ENCODE measurements at regions of chr18 and their contacts with region 1.

Region 1: GRCh38 chr18:67290421-67290820 is 226.1 kb downstream of the DSEL start:
- DNase-seq: no peak
- ATAC-seq: no peak
- H3K4me3 ChIP-seq: no peak overlapping the region
- H3K4me3 Mint-ChIP-seq: no peak overlapping the region
- H3K27ac ChIP-seq: no peak overlapping the region
- H3K27ac Mint-ChIP-seq: no peak overlapping the region
- H3K4me1 ChIP-seq: no peaks in the 10 kb centered on the region
- H3K4me1 Mint-ChIP-seq: no peaks in the 10 kb centered on the region
- H3K27me3 ChIP-seq: no peaks in the 10 kb centered on the region
- H3K27me3 Mint-ChIP-seq: no peaks in the 10 kb centered on the region
- CTCF ChIP-seq: no peak

Region 2: DNA sequence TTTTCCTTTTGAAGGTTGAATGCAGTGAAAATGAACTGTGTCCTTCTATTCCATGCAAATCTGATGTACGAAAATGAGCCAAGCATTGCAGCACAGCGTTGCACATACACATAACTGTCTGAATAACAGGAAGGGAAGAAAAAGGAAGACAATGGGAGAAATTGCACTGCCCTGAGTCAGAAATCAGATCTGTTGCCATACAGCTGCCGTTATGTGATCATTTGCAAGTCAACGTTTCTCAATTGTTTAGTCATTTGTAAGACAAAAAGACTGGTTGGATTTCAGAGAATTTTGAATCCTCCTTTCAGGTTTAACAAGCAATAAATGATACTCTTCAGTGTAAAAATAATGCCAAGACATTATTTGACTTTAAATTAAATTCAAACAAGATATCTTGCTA is 58.0 kb before region 1 on chr18:
- CTCF ChIA-PET with region 1: no interaction called
- POLR2A ChIA-PET with region 1: no interaction called
- intact Hi-C with region 1: no loop called
- DNase-seq: no peak
- ATAC-seq: no peak
- H3K4me3 ChIP-seq: no peak overlapping the region
- H3K4me3 Mint-ChIP-seq: no peak overlapping the region
- H3K27ac ChIP-seq: no peak overlapping the region
- H3K27ac Mint-ChIP-seq: no peak overlapping the region
- H3K4me1 ChIP-seq: no peaks in the 10 kb centered on the region
- H3K4me1 Mint-ChIP-seq: no peaks in the 10 kb centered on the region
- H3K27me3 ChIP-seq: no peaks in the 10 kb centered on the region
- H3K27me3 Mint-ChIP-seq: no peaks in the 10 kb centered on the region
- CTCF ChIP-seq: no peak

Region 3: DNA sequence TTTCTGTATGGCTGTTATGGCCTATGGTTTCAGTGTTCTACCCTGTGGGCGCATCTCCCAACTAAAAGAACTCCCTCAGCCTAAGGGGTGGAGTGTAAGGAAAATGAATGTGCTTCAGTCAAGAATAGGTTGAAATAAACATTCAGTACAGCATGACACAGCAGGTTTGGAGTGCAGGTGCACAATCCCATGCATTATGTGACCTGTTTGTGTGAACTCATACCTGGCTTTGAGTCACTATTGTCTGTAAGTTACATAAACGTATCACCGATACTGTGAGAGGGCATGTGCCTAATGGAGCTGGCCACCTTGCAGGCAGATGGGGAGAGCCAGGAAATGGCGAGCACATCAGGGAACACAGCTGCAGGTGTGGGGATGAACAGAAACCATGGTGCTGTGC is 10.1 kb after region 1 on chr18:
- CTCF ChIA-PET with region 1: no interaction called
- POLR2A ChIA-PET with region 1: no interaction called
- intact Hi-C with region 1: loop called (anchors 1 kb)
- DNase-seq: peak in 6 of 14 experiments; percentile 0 to 41 (median 24)
- ATAC-seq: no peak
- H3K4me3 ChIP-seq: no peak overlapping the region
- H3K4me3 Mint-ChIP-seq: no peak overlapping the region
- H3K27ac ChIP-seq: no peak overlapping the region
- H3K27ac Mint-ChIP-seq: no peak overlapping the region
- H3K4me1 ChIP-seq: peaks cover 4% of the 10 kb centered on the region
- H3K4me1 Mint-ChIP-seq: peaks cover 17% of the 10 kb centered on the region
- H3K27me3 ChIP-seq: no peaks in the 10 kb centered on the region
- H3K27me3 Mint-ChIP-seq: no peaks in the 10 kb centered on the region
- CTCF ChIP-seq: no peak

Region 4: GRCh38 chr18:68387246-68387645 is 1096.8 kb after region 1 on chr18:
- CTCF ChIA-PET with region 1: no interaction called
- POLR2A ChIA-PET with region 1: no interaction called
- intact Hi-C with region 1: no loop called
- DNase-seq: no peak
- ATAC-seq: no peak
- H3K4me3 ChIP-seq: no peak overlapping the region
- H3K4me3 Mint-ChIP-seq: no peak overlapping the region
- H3K27ac ChIP-seq: no peak overlapping the region
- H3K27ac Mint-ChIP-seq: no peak overlapping the region
- H3K4me1 ChIP-seq: no peaks in the 10 kb centered on the region
- H3K4me1 Mint-ChIP-seq: no peaks in the 10 kb centered on the region
- H3K27me3 ChIP-seq: no peaks in the 10 kb centered on the region
- H3K27me3 Mint-ChIP-seq: no peaks in the 10 kb centered on the region
- CTCF ChIP-seq: no peak